CD8-positive, alpha-beta T cell (primary cell): ENCODE measurements at regions of chr10 and their contacts with region 1.

Region 1: GRCh38 chr10:89701238-89702120 is at the start of gene KIF20B:
- DNase-seq: peak; percentile 90 to 97 (median 94)
- ATAC-seq: peak; percentile 95
- H3K4me3 ChIP-seq: peak within 1 kb of the TSS; percentile 85 to 86
- H3K4me3 Mint-ChIP-seq: peak within 1 kb of the TSS; percentile 98
- H3K27ac ChIP-seq: peak within 1 kb of the TSS; percentile 77 to 86
- H3K27ac Mint-ChIP-seq: peak within 1 kb of the TSS; percentile 99
- H3K4me1 ChIP-seq: peaks cover 14% of the 10 kb centered on the region
- H3K4me1 Mint-ChIP-seq: peaks cover 36% of the 10 kb centered on the region
- H3K27me3 ChIP-seq: no peaks in the 10 kb centered on the region
- H3K27me3 Mint-ChIP-seq: no peaks in the 10 kb centered on the region
- CTCF ChIP-seq: peak; percentile 14
- total RNA-seq, gene KIF20B: 23.1 to 26.3 TPM

Region 2: DNA sequence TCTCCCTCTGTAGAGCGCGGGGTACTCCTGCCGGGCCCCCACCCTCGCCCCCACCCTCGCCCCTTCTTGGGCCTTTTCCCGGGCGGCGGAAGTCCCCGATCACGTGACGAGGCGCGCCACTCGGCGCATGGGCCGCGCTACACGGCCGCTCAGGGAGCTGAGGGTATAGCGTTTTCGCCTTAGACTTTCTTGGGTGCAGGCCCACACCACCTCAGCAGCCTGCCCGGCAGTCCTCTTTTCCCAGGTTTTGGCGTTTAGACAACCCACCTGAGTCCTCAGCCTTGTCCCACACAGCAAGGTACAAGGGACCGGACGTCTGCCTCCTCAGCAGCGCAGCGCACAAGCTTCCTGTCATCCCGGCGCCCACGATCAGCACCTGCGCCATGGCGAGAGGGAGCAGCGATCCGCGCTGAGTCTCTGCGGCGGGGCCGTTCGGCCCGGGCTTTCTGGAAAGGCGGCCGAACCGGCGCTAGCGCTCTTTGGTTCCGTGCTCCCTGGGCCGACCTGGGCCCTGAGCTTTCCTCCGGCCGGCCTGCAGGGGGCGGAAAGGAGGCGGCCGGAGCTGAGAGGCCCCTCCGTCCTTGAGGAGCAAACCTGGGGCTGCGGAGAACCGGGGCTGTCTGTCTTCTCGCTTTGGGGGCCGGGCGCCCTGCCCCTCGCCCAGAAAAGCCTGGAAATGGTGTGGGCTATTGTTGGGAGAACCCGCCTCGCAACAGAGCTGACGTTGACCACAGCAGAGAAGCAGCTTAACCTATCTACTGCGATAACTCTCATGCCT is 1118.5 kb before region 1 on chr10 and contains the start of gene RNLS:
- CTCF ChIA-PET with region 1: no interaction called
- POLR2A ChIA-PET with region 1: no interaction called
- intact Hi-C with region 1: loop called in 1 of 2 experiments (anchors 5 kb)
- DNase-seq: peak; percentile 21 to 84 (median 65)
- ATAC-seq: peak; percentile 83
- H3K4me3 ChIP-seq: peak within 1 kb of the TSS; percentile 83
- H3K4me3 Mint-ChIP-seq: peak within 1 kb of the TSS; percentile 91
- H3K27ac ChIP-seq: peak within 1 kb of the TSS; percentile 72 to 83
- H3K27ac Mint-ChIP-seq: peak within 1 kb of the TSS; percentile 92
- H3K4me1 ChIP-seq: peaks cover 7% of the 10 kb centered on the region
- H3K4me1 Mint-ChIP-seq: peaks cover 11% of the 10 kb centered on the region
- H3K27me3 ChIP-seq: no peaks in the 10 kb centered on the region
- H3K27me3 Mint-ChIP-seq: peaks cover 3% of the 10 kb centered on the region
- CTCF ChIP-seq: peak; percentile 61
- total RNA-seq, gene RNLS: 1.6 to 1.7 TPM

Region 3: DNA sequence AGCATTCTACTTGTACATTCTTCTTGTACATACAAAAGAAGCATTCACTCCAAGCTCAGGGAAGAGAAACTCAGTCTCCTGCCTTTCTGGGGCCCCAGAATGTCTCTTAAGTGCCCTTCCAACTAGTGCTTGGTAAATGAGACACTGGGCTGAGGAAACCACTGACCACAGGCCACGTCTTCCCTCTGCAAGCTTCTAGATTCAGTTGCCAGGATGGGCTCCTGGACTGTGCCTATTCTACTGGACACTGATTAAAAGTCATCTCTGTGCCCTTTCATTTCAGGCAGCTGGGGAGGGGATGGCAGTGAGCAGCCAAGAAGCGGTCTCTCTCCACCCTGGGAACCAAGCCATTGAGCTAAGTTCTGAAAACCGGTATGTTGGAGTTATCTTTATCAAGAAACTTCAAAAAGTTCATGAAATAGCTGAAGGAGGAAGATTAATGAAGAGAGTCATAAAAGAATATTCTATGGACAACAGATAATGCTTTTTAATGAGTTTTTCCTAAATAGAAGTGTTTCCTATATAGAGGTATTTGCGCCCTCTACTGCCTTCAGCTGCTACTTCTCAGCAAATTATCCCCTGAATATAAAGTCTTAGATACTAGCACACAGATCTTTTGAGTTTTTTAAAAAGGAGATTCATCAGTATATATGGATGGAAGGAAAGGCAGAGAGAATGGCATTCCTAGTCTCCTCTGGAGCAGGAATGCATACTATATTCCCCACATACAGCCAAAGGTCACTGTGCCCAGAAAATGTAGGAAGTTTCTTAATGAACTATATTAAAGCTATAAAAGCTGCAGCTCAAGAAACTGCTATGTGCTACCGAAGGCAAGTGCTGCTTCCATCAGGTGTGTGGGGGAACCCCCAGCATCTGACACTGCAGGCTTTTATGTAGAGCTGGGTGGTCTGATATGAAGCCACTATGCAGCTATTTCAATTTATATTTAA is 332.0 kb before region 1 on chr10:
- CTCF ChIA-PET with region 1: no interaction called
- POLR2A ChIA-PET with region 1: no interaction called
- intact Hi-C with region 1: no loop called
- DNase-seq: peak in 3 of 9 experiments; percentile 9 to 53 (median 41)
- ATAC-seq: peak; percentile 46
- H3K4me3 ChIP-seq: no peak overlapping the region
- H3K4me3 Mint-ChIP-seq: no peak overlapping the region
- H3K27ac ChIP-seq: no peak overlapping the region
- H3K27ac Mint-ChIP-seq: no peak overlapping the region
- H3K4me1 ChIP-seq: no peaks in the 10 kb centered on the region
- H3K4me1 Mint-ChIP-seq: peaks cover 5% of the 10 kb centered on the region
- H3K27me3 ChIP-seq: no peaks in the 10 kb centered on the region
- H3K27me3 Mint-ChIP-seq: peaks cover 10% of the 10 kb centered on the region
- CTCF ChIP-seq: peak; percentile 57

Region 4: GRCh38 chr10:89426230-89426868 is 275.1 kb before region 1 on chr10:
- CTCF ChIA-PET with region 1: no interaction called
- POLR2A ChIA-PET with region 1: no interaction called
- intact Hi-C with region 1: loop called in 1 of 2 experiments (anchors 5 kb)
- DNase-seq: peak in 2 of 9 experiments; percentile 42 to 57
- ATAC-seq: peak; percentile 49
- H3K4me3 ChIP-seq: no peak overlapping the region
- H3K4me3 Mint-ChIP-seq: no peak overlapping the region
- H3K27ac ChIP-seq: no peak overlapping the region
- H3K27ac Mint-ChIP-seq: no peak overlapping the region
- H3K4me1 ChIP-seq: no peaks in the 10 kb centered on the region
- H3K4me1 Mint-ChIP-seq: peaks cover under 1% of the 10 kb centered on the region
- H3K27me3 ChIP-seq: no peaks in the 10 kb centered on the region
- H3K27me3 Mint-ChIP-seq: peaks cover 4% of the 10 kb centered on the region
- CTCF ChIP-seq: peak; percentile 51

Region 5: DNA sequence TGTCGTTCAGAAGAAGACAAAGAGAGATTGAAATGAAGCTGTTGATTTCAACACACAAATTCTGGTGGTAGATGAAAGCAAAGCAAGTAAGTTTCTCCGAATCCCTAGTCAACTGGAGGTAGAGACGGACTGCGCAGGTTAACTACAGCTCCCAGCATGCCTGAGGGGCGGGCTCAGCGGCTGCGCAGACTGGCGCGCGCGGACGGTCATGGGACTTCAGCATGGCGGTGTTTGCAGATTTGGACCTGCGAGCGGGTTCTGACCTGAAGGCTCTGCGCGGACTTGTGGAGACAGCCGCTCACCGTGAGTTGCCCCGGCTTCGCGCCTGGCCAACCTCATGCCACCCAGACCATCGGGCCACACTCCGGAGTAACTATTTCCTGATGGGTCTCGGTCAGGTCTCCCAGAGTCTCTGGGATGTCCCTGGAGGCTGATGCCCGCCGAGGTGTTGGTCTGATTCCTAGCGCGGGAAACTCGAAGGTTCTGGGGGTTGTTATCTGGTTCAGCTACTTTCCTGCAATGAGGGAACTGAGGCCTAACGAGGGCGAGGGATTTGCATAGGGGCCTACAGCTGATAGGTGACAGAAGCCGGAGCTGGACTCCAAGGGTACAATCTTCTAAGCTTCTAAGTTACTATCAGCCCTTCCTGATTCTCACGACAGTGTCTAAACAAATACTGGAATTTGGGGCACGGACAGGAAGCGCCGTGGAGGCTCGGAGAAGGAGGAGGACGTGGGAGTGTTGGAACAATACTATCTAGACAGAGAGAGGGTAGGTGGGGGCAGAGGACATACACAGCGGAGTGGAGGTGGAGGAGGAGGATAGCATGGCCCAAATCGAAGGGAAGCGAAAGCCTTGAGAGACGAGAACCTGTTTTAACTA is 1170.5 kb after region 1 on chr10 and contains the start of gene RPP30:
- CTCF ChIA-PET with region 1: no interaction called
- POLR2A ChIA-PET with region 1: no interaction called
- intact Hi-C with region 1: loop called in 1 of 2 experiments (anchors 5 kb)
- DNase-seq: peak; percentile 65 to 84 (median 79)
- ATAC-seq: peak; percentile 99
- H3K4me3 ChIP-seq: peak within 1 kb of the TSS; percentile 73 to 95
- H3K4me3 Mint-ChIP-seq: peak within 1 kb of the TSS; percentile 97
- H3K27ac ChIP-seq: peak within 1 kb of the TSS; percentile 34 to 58
- H3K27ac Mint-ChIP-seq: peak within 1 kb of the TSS; percentile 88
- H3K4me1 ChIP-seq: peaks cover 18% of the 10 kb centered on the region
- H3K4me1 Mint-ChIP-seq: peaks cover 40% of the 10 kb centered on the region
- H3K27me3 ChIP-seq: no peaks in the 10 kb centered on the region
- H3K27me3 Mint-ChIP-seq: peaks cover 20% of the 10 kb centered on the region
- CTCF ChIP-seq: no peak
- total RNA-seq, gene RPP30: 29.7 TPM

Region 6: DNA sequence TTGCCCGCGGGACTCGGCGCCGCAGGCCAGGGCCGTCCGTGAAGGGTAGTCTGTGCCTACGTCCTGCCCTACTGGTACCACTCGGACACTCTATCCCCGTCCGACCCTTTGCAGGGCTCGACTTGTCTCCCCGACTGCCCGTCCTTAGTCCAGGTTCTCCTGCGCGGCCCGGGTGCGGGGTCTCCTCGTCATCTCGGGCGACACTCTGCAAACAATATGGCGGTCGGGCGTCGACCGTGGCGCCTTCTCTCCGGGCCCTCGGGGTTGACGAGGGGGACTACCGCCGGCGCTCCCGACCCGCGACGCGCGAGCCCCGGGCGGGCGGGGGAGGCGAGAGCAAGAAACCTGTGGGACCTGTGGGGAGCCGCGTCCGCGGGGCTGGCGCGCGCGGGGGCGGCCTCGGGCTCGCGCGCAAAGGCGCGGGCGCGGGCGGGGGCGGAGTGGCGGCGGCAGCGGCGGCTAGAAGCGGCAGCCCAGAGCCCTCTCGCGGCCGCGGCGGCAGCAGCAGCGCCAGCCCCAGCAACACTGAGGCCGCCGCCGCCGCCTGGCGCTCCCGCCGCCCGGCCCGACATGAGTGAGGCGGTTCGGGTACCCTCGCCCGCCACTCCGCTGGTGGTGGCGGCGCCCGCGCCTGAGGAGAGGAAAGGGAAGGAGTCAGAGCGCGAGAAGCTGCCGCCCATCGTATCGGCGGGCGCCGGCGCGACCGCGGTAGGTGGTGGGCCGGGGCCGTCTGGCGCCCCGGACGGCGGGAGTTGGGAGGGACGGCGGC is 1708.6 kb after region 1 on chr10 and contains the start of gene HECTD2:
- CTCF ChIA-PET with region 1: no interaction called
- POLR2A ChIA-PET with region 1: no interaction called
- intact Hi-C with region 1: loop called in 1 of 2 experiments (anchors 10 kb)
- DNase-seq: peak; percentile 65 to 92 (median 82)
- ATAC-seq: peak; percentile 86
- H3K4me3 ChIP-seq: peak within 1 kb of the TSS; percentile 91 to 97
- H3K4me3 Mint-ChIP-seq: peak within 1 kb of the TSS; percentile 86
- H3K27ac ChIP-seq: peak within 1 kb of the TSS; percentile 90 to 95
- H3K27ac Mint-ChIP-seq: peak within 1 kb of the TSS; percentile 90
- H3K4me1 ChIP-seq: peaks cover 12% of the 10 kb centered on the region
- H3K4me1 Mint-ChIP-seq: peaks cover 13% of the 10 kb centered on the region
- H3K27me3 ChIP-seq: no peaks in the 10 kb centered on the region
- H3K27me3 Mint-ChIP-seq: no peaks in the 10 kb centered on the region
- CTCF ChIP-seq: peak; percentile 41
- total RNA-seq, gene HECTD2: 0.69 to 1.5 TPM